ENCODE measurements at regions of chr19 and their contacts with region 1.

Region 1: GRCh38 chr19:29873024-29873800 is 61.4 kb downstream of the CCNE1 start:
- DNase-seq: peak; percentile 55 to 85
- H3K4me3 ChIP-seq: peak overlapping the region; percentile 37 to 60 (median 42)
- H3K27ac ChIP-seq: no peak overlapping the region
- H3K4me1 ChIP-seq: peaks cover 11 to 33% (median 22%) of the 10 kb centered on the region in 4 donors
- H3K27me3 ChIP-seq: peaks cover 0 to 57% (median 28%) of the 10 kb centered on the region in 3 donors
- CTCF ChIP-seq: peak in 5 of 7 experiments; percentile 36 to 89 (median 78)
- EP300 ChIP-seq: no peak
- POLR2A ChIP-seq: no peak

Region 2: DNA sequence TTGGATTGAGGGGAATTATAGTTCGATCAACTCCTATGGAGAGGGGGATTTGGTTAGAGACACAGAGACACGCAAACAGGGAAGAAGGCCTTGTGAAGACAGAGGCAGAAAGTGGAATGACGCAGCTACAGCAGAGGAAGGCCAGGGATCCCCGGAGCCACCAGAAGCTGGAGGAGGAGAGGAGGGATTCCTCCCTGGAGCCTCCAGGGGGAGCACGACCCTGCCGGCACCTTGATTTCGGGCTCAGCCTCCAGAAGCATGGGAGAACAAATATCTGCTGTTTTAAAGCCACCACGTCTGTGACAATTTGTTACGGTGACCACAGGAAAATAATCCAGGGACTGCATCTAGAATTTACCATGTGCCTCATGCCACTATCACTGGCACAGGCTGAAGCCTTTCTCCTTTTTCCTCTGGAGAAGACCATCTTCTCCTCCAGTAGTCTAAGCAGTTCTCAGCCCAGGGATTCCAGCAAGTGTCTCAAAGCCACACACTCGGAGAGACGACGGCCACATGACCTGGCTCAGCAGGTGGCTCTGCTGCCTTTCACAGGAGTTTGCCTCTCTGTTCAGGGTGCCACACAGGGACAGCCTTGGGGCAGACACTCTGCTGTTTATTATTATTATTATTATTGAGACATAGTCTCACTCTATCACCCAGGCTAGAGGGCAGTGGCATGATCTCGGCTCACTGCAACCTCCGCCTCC is 101.4 kb before region 1 on chr19:
- intact Hi-C with region 1: loop called (anchors 5 kb)
- DNase-seq: peak; percentile 41 to 85
- H3K4me3 ChIP-seq: no peak overlapping the region
- H3K27ac ChIP-seq: no peak overlapping the region
- H3K4me1 ChIP-seq: peaks cover 0 to 6% (median 0%) of the 10 kb centered on the region in 4 donors
- H3K27me3 ChIP-seq: peaks cover 0 to 13% (median 0%) of the 10 kb centered on the region in 3 donors
- CTCF ChIP-seq: peak in 4 of 7 experiments; percentile 50 to 77 (median 55)
- EP300 ChIP-seq: no peak
- POLR2A ChIP-seq: no peak